Ovary (tissue), 10 donors: ENCODE measurements at regions of chr11 and their contacts with region 1.

Region 1: GRCh38 chr11:33257897-33258630 is 883 bp downstream of the HIPK3 start:
- DNase-seq: peak; percentile 90 to 96 (median 95)
- H3K4me3 ChIP-seq: peak overlapping the region; percentile 95
- H3K27ac ChIP-seq: peak overlapping the region; percentile 100
- H3K4me1 ChIP-seq: peaks cover 4% of the 10 kb centered on the region
- H3K27me3 ChIP-seq: no peaks in the 10 kb centered on the region
- CTCF ChIP-seq: peak in 2 of 3 donors; percentile 35 to 65
- EP300 ChIP-seq: no peak
- POLR2A ChIP-seq: peak; percentile 85

Region 2: DNA sequence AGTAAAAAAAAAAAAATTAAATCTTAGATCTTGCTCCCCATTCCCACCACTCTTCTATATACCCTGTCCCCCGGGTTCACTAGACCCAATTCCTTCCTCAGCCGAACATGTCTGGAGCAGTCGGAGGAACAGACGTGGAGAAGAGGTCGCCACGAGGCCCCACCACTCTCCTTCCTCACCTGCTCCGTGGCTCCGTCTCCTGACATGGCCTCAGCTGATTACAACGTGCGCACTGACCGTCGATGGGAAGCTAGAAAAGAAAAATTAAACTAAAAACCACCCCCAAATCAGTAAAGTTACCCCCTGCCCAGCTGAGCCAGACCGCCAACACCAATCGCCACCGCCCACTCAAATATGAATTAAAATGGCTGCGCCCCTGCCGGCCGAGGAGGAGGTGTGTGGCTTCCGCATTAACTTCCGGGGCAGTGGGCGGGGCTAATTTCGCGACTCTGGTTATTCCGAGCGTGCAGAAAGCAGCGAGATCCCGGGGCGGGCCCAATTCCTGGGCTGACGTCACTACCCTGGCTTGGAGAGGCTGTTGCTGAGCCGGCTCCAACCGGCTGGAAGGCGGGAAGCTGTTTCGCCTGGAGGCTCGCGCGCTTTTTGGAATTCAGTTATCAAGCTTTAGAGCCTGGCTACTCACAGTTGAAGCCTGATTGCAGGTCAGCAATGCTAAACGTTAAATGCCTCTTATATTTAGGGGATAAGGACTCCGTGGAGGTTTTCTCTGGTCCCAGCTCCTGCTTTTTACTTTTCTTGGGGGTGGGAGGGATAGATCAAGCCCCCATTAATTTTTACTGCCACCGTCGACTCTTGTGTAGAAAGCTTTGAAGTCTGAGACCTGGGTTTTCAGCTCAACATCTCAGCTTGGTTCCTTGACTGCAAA is 96.7 kb before region 1 on chr11 and contains the start of gene CSTF3:
- intact Hi-C with region 1: loop called (anchors 2 to 10 kb)
- DNase-seq: peak; percentile 100
- H3K4me3 ChIP-seq: peak within 1 kb of the TSS; percentile 84
- H3K27ac ChIP-seq: peak within 1 kb of the TSS; percentile 35 to 58
- H3K4me1 ChIP-seq: peaks cover 6% of the 10 kb centered on the region
- H3K27me3 ChIP-seq: no peaks in the 10 kb centered on the region
- CTCF ChIP-seq: peak; percentile 52 to 93 (median 79)
- EP300 ChIP-seq: no peak
- POLR2A ChIP-seq: peak; percentile 71
- total RNA-seq, gene CSTF3: 7.4 to 28.8 (median 24.8) TPM

Region 3: DNA sequence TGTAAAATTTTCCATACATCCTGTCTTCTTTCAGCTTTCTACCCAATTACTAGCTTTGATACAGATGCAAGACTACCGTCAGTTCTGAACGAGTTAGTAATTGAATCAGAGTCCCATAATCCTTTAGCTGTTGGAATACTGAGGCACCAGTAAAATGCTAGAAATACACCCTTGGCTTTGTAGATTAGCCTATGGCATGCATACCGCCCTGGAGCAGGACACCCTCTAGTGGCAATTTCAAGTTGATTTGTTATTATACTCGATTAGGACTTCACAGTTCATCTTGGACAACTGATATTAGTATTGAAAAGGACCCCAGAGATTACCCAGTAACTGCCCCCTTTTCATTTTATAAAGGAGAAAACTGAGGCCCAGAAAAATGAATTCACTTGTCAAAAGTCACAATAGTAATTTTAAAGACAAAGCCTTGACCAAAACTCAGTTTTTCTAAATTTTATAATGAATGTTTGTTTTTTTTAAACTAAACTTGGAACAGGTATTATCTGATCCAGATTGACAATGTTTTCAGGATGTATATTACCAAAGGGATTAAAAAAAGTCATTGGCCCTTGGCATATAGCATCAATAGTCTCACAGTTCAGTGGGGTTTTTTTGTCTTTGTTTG is 71.8 kb after region 1 on chr11:
- intact Hi-C with region 1: loop called in 1 of 4 experiments (anchors 5 kb)
- DNase-seq: peak in 1 of 5 donors; percentile 45
- H3K4me3 ChIP-seq: no peak overlapping the region
- H3K27ac ChIP-seq: no peak overlapping the region
- H3K4me1 ChIP-seq: peaks cover 6% of the 10 kb centered on the region
- H3K27me3 ChIP-seq: no peaks in the 10 kb centered on the region
- CTCF ChIP-seq: peak in 2 of 3 donors; percentile 26 to 57
- EP300 ChIP-seq: no peak
- POLR2A ChIP-seq: no peak